GM12878 (cell line): ENCODE measurements at regions of chr15 and their contacts with region 1.

Region 1: DNA sequence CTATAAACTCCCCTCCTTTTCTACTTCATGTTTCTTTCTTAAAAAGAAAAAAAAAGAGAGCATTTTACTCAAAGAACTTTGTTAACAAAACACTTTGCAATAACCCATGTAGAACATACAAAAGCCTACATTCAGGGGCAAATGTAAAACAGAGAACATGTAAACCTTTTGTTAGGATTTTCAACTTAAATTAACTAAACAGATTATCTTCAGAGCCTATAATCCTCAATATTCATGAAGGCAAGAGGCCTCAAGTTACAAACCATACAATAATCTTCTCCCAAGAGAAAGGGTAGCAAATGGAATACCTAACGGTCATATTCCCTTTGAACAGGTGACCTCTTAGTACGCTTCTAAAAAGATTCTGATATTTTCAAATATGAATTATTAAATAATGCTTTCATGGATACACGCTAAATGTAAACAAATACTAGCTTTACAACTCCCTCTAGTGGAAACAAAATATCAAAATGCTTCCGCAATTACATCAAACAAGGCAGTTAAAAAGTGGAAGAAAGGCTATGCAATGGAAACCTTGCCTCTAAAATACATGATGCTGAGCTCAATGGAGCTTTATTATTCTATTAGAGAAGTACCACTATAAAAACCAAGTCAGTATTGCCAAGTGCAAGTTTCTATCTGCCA is 9.9 kb downstream of the CEP152 start:
- DNase-seq: no peak
- ATAC-seq: no peak
- H3K4me3 ChIP-seq: no peak overlapping the region
- H3K27ac ChIP-seq: no peak overlapping the region
- H3K4me1 ChIP-seq: peaks cover 12% of the 10 kb centered on the region
- H3K27me3 ChIP-seq: no peaks in the 10 kb centered on the region
- CTCF ChIP-seq: peak; percentile 21 to 43 (median 32); a peak in 4 of 6 replicates
- EP300 ChIP-seq: no peak
- POLR2A ChIP-seq: no peak
- RAD21 ChIP-seq: peak; percentile 66

Region 2: GRCh38 chr15:47473832-47474231 is 1327.1 kb before region 1 on chr15:
- CTCF ChIA-PET with region 1: no interaction called
- POLR2A ChIA-PET with region 1: no interaction called
- RAD21 ChIA-PET with region 1: no interaction called
- SMC1A ChIA-PET with region 1: no interaction called
- in situ Hi-C with region 1: no loop called
- intact Hi-C with region 1: no loop called
- DNase-seq: no peak
- ATAC-seq: no peak
- H3K4me3 ChIP-seq: no peak overlapping the region
- H3K27ac ChIP-seq: no peak overlapping the region
- H3K4me1 ChIP-seq: no peaks in the 10 kb centered on the region
- H3K27me3 ChIP-seq: no peaks in the 10 kb centered on the region
- CTCF ChIP-seq: no peak
- EP300 ChIP-seq: no peak
- POLR2A ChIP-seq: no peak
- RAD21 ChIP-seq: no peak

Region 3: DNA sequence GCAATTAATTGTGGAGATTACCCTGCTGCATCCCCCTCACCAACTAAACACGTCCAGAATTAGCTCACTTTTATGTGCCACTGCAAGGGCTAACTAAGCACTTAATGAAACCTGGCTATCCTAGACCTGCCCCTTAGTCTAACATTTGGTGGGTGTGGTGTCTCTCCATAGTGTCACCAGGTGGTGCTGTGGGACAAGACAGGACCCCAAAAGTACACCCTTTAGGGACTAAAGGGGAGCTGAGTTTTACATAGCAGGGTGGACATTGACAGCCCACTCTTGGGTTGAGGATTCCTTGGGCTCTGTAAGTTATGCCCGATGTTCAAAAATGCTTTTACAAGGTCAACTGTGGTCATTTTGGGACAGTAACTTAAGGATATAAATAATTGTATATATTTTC is 464.0 kb before region 1 on chr15:
- CTCF ChIA-PET with region 1: interaction called, 10 read pairs
- POLR2A ChIA-PET with region 1: no interaction called
- RAD21 ChIA-PET with region 1: no interaction called
- SMC1A ChIA-PET with region 1: no interaction called
- in situ Hi-C with region 1: no loop called
- intact Hi-C with region 1: no loop called
- DNase-seq: no peak
- ATAC-seq: peak; percentile 68
- H3K4me3 ChIP-seq: no peak overlapping the region
- H3K27ac ChIP-seq: no peak overlapping the region
- H3K4me1 ChIP-seq: peaks cover 3% of the 10 kb centered on the region; the same call in 1 of the 2 replicates
- H3K27me3 ChIP-seq: no peaks in the 10 kb centered on the region
- CTCF ChIP-seq: peak; percentile 50 to 62 (median 60); a peak in 4 of 6 replicates
- EP300 ChIP-seq: no peak
- POLR2A ChIP-seq: no peak
- RAD21 ChIP-seq: peak; percentile 50; the same call in 1 of the 2 replicates